CD8-positive, alpha-beta T cell (primary cell): ENCODE measurements at regions of chr13 and their contacts with region 1.

Region 1: DNA sequence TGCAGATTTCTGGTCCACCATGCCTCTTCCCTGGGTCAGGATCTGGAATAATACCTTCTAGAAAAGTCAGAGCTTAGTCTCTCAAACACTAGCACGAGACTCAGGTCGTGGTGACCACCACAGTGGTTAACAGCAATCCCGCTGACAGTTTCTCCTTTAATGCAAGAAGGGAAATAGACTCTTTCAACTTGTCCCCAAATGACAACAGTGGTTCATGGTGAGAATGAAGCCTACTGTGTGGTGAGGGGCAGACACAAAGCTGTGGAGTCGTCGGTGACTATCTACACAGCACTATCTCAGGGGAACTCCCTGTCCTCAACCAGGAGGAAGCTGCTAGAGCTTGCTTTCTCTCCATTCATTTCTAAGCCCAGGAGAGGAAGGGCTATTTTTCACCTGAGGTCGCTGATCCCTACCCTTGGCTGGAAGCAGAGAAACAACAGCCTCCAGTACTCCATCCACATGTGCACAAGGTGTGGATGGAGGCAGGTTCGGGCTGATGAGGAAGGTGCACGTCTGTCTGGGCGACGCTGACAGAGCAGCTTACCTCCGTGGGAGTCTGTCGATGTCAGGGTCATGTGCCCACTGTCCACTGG is 72.4 kb downstream of the STK24 start:
- DNase-seq: peak in 3 of 9 experiments; percentile 50 to 66 (median 58)
- ATAC-seq: peak; percentile 85
- H3K4me3 ChIP-seq: no peak overlapping the region
- H3K4me3 Mint-ChIP-seq: peak overlapping the region; percentile 13
- H3K27ac ChIP-seq: no peak overlapping the region
- H3K27ac Mint-ChIP-seq: peak overlapping the region; percentile 15
- H3K4me1 ChIP-seq: peaks cover 30% of the 10 kb centered on the region
- H3K4me1 Mint-ChIP-seq: peaks cover 93% of the 10 kb centered on the region
- H3K27me3 ChIP-seq: no peaks in the 10 kb centered on the region
- H3K27me3 Mint-ChIP-seq: no peaks in the 10 kb centered on the region
- CTCF ChIP-seq: no peak

Region 2: GRCh38 chr13:98476538-98476966 is 27.9 kb before region 1 on chr13:
- CTCF ChIA-PET with region 1: no interaction called
- POLR2A ChIA-PET with region 1: interaction called, 3 read pairs
- intact Hi-C with region 1: loop called in 1 of 2 experiments (anchors 2 kb)
- DNase-seq: peak; percentile 57 to 95 (median 87)
- ATAC-seq: peak; percentile 90
- H3K4me3 ChIP-seq: peak overlapping the region in 1 of 2 experiments; percentile 20
- H3K4me3 Mint-ChIP-seq: peak overlapping the region; percentile 67
- H3K27ac ChIP-seq: peak overlapping the region; percentile 44 to 58
- H3K27ac Mint-ChIP-seq: peak overlapping the region; percentile 94
- H3K4me1 ChIP-seq: peaks cover 44% of the 10 kb centered on the region
- H3K4me1 Mint-ChIP-seq: peaks cover 66% of the 10 kb centered on the region
- H3K27me3 ChIP-seq: no peaks in the 10 kb centered on the region
- H3K27me3 Mint-ChIP-seq: no peaks in the 10 kb centered on the region
- CTCF ChIP-seq: no peak